Activated naive CD4-positive, alpha-beta T cell treated with anti-CD3 and anti-CD28 coated beads for 36 hours (primary cell): ENCODE measurements at regions of chr12 and their contacts with region 1.

Region 1: GRCh38 chr12:105107494-105108371 is at the start of gene WASHC4:
- DNase-seq: peak; percentile 95
- H3K4me3 Mint-ChIP-seq: peak within 1 kb of the TSS; percentile 90
- H3K27ac Mint-ChIP-seq: peak within 1 kb of the TSS; percentile 91
- H3K4me1 Mint-ChIP-seq: peaks cover 35% of the 10 kb centered on the region
- H3K27me3 Mint-ChIP-seq: peaks cover 13% of the 10 kb centered on the region
- total RNA-seq, gene WASHC4: 23.7 to 26.0 TPM

Region 2: DNA sequence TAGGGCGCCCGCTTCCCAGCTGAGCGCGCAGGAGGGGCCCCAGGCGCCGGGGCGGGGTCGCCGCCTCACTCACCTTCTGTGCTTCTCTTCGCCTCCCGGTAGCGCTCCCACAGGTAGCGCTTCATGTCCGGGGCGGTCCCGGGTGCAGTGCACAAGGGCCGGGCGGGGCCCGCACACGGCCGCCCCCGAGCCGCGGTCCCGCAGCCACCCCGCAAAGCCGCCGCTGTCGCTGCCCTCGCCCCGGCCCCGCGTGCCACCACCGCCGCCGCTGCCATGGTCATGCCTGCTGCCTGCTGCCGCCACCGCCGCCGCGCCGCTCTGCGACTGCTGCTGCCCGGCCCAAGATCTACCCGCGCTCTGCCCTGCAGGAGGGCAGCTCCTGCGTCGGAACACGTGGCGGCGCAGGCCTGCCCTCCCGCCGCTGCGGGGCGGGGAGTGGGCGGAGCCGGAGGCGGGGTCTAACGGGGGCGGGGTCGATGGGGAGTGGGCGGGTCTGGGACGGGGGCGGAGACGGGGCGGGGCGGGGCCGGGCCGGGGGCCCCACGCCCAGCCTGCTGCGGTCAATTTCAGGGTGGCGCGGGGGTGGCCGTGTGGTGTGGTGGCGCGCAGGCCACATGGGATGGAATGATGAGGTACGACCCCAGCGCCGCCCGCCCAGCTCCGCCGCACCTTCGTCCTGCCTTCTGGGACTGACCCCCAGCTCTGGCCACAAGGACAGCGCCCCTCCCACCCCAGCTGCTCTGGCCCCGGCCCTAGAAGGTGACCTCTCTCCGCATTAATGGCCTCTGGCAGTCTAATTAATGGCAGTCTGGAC is 1266.7 kb before region 1 on chr12 and contains the start of gene NT5DC3:
- CTCF ChIA-PET with region 1: no interaction called
- intact Hi-C with region 1: loop called (anchors 5 kb)
- DNase-seq: peak; percentile 82
- H3K4me3 Mint-ChIP-seq: peak within 1 kb of the TSS; percentile 81
- H3K27ac Mint-ChIP-seq: no peak within 1 kb of the TSS
- H3K4me1 Mint-ChIP-seq: peaks cover 21% of the 10 kb centered on the region
- H3K27me3 Mint-ChIP-seq: no peaks in the 10 kb centered on the region
- total RNA-seq, gene NT5DC3: 6.0 to 6.4 TPM

Region 3: DNA sequence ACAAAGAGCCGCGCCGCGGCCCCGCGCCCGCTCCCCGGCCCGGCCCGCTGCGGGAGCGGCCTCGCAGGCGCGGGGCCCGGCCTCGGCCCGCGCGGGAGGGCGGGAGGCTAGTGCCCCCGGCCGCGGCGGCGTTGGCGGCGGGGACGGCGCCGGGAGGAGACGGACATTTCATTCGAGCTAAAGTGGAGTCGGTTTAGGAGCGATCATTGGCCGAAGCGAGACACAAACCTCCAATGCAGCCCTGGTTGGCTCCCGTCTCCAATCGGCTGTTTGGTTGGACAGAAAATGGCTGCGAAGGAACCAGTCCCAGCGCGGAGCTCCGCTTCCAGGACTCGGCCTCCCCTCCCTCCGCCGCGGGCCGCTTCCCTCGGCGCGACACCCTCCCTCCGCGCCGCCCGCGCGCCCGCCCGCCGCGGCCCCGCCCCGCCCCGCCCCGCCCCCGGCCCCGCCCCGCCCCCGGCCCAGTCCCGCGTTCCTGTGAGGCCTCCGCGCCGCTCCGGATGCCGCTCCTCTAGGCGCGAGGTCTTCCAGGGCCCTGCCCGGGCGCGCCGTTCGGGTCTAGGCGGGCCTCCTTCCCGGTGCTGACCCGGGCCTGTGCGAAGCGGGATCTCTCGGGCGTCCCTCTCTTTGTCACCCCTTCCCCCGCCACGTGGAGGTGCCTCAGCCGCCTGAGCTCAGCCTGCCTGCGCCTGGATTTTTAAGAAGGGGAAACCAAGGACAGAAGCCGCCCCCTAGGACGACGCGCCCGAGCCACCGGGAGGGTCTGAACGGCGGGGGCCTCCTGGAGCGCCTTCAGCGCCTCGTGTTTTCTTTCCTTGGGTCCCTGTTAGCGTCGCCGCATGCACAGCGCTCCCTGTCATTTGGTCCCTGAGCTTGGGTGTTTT is 969.6 kb before region 1 on chr12 and contains the start of gene NFYB:
- CTCF ChIA-PET with region 1: no interaction called
- intact Hi-C with region 1: loop called (anchors 2 kb)
- DNase-seq: peak; percentile 95
- H3K4me3 Mint-ChIP-seq: peak within 1 kb of the TSS; percentile 84
- H3K27ac Mint-ChIP-seq: peak within 1 kb of the TSS; percentile 84
- H3K4me1 Mint-ChIP-seq: peaks cover 14% of the 10 kb centered on the region
- H3K27me3 Mint-ChIP-seq: no peaks in the 10 kb centered on the region
- total RNA-seq, gene NFYB: 23.3 to 28.3 TPM

Region 4: GRCh38 chr12:104958009-104958945 is 149.5 kb before region 1 on chr12 and contains the start of gene SLC41A2:
- CTCF ChIA-PET with region 1: no interaction called
- intact Hi-C with region 1: loop called (anchors 1 kb)
- DNase-seq: peak; percentile 85
- H3K4me3 Mint-ChIP-seq: peak within 1 kb of the TSS; percentile 84
- H3K27ac Mint-ChIP-seq: peak within 1 kb of the TSS; percentile 72
- H3K4me1 Mint-ChIP-seq: peaks cover 19% of the 10 kb centered on the region
- H3K27me3 Mint-ChIP-seq: peaks cover 14% of the 10 kb centered on the region
- total RNA-seq, gene SLC41A2: 2.7 to 3.5 TPM

Region 5: DNA sequence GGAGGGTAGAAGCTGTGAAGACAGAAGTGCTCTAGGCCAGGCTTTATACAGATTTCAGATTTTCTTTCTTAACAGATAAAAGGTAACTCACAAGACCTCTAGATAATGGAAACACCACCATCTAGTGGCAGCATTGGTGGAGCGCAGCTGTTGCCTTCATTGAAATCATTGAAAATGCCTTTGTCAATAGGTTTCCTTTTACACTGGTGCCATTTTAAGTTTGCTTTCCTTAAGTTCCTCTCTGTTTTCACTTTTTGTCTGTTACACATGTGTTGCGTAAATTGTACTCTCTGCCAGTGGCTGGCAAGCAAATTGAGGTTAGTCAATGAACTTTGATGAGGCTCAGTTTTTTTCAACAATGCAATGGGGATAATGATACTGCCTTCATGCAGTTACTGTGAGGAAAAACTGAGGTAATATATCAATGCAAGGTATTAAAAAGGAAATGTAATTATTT is 54.6 kb before region 1 on chr12:
- CTCF ChIA-PET with region 1: no interaction called
- intact Hi-C with region 1: no loop called
- DNase-seq: peak; percentile 89
- H3K4me3 Mint-ChIP-seq: no peak overlapping the region
- H3K27ac Mint-ChIP-seq: no peak overlapping the region
- H3K4me1 Mint-ChIP-seq: no peaks in the 10 kb centered on the region
- H3K27me3 Mint-ChIP-seq: no peaks in the 10 kb centered on the region

Region 6: GRCh38 chr12:105084251-105085250 is 23.2 kb before region 1 on chr12 and contains the start of gene ALDH1L2:
- CTCF ChIA-PET with region 1: no interaction called
- intact Hi-C with region 1: loop called (anchors 1 kb)
- DNase-seq: peak; percentile 65
- H3K4me3 Mint-ChIP-seq: peak within 1 kb of the TSS; percentile 87
- H3K27ac Mint-ChIP-seq: no peak within 1 kb of the TSS
- H3K4me1 Mint-ChIP-seq: peaks cover 8% of the 10 kb centered on the region
- H3K27me3 Mint-ChIP-seq: peaks cover 21% of the 10 kb centered on the region
- total RNA-seq, gene ALDH1L2: 12.2 to 14.3 TPM

Region 7: GRCh38 chr12:105330283-105330930 is 222.7 kb after region 1 on chr12 and contains the start of gene C12orf75:
- CTCF ChIA-PET with region 1: no interaction called
- intact Hi-C with region 1: loop called (anchors 2 kb)
- DNase-seq: peak; percentile 86
- H3K4me3 Mint-ChIP-seq: peak within 1 kb of the TSS; percentile 76
- H3K27ac Mint-ChIP-seq: peak within 1 kb of the TSS; percentile 14
- H3K4me1 Mint-ChIP-seq: peaks cover 35% of the 10 kb centered on the region
- H3K27me3 Mint-ChIP-seq: no peaks in the 10 kb centered on the region
- total RNA-seq, gene C12orf75: 41.1 to 48.5 TPM